ENCODE measurements at regions of chr17 and their contacts with region 1.

Region 1: DNA sequence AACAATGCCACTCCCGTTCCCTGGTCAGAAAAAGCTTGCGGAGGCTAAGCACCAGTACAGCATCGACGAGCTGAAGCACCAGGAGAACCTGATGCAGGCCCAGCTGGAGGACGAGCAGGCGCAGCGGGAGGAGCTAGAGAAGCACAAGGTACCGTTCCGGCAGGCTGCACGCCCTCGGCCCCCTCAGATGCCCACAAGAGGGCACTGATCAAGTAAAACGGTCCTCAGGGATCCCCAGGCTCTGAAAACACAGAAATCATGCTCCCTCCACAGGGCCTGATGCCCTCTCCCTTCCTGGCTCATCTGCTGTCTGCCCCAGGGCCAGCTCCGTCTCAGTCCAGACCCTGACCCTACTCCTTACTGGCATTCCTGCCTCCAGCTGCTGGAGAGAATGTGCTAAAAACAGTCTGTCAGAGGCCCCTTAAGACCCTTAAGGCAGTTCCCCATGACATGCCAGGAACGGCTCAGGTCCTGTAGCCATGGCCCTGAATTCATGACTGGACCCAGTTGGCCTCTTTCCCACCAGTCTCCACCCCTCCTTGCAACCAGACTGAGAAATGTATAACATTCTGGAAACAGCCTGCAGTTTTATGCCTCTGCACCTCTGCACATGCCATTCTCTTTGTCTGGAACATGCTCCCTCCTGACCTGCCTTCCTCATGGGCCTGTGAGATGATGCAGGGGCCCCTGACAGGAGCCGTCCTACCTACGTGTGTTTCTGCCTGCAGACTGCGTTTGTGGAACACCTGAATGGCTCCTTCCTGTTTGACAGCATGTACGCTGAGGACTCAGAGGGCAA is 21.8 kb downstream of the DRC3 start:
- DNase-seq: peak; percentile 18
- ATAC-seq: peak; percentile 50
- H3K4me3 ChIP-seq: no peak overlapping the region
- H3K27ac ChIP-seq: no peak overlapping the region
- H3K4me1 ChIP-seq: peaks cover 8% of the 10 kb centered on the region; the same call in 1 of the 2 replicates
- H3K27me3 ChIP-seq: no peaks in the 10 kb centered on the region
- CTCF ChIP-seq: peak; percentile 39
- POLR2A ChIP-seq: no peak
- RAD21 ChIP-seq: peak; percentile 41

Region 2: GRCh38 chr17:18025945-18026776 is 31.7 kb after region 1 on chr17:
- CTCF ChIA-PET with region 1: no interaction called
- POLR2A ChIA-PET with region 1: no interaction called
- dilution Hi-C with region 1: no loop called
- in situ Hi-C with region 1: no loop called
- intact Hi-C with region 1: loop called (anchors 5 kb)
- DNase-seq: peak; percentile 81
- ATAC-seq: peak; percentile 82
- H3K4me3 ChIP-seq: no peak overlapping the region
- H3K27ac ChIP-seq: no peak overlapping the region
- H3K4me1 ChIP-seq: peaks cover 6% of the 10 kb centered on the region; the same call in 1 of the 2 replicates
- H3K27me3 ChIP-seq: no peaks in the 10 kb centered on the region
- CTCF ChIP-seq: 0 out of 2 replicates have a peak, but pooled peaks have one; percentile 7
- POLR2A ChIP-seq: no peak
- RAD21 ChIP-seq: no peak

Measured in IMR-90 (cell line).